ENCODE measurements at regions of chr14 and their contacts with region 1.

Region 1: DNA sequence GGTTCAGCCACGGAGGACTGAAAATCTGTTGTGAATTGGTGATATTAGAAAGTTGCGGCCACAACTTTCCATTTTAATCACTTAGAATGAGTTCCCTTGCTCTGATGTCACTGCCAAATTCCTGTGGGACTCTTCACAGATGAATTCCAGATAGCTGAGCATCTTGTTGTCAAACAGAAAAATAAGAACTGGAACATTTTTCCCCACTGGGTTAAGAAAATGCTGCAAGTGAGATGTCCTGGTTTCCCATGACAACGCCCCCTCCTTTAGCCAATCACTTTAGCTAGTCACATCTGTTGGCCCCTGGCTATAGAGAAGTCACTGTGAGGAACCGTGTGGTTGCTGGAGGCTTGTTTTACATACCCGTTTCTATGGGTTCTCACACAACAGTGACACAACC is 135.9 kb downstream of the KTN1 start:
- DNase-seq: no peak
- H3K4me3 ChIP-seq: no peak overlapping the region
- H3K27ac ChIP-seq: peak overlapping the region in 2 of 4 donors; percentile 50 to 59
- H3K4me1 ChIP-seq: no peaks in the 10 kb centered on the region
- H3K27me3 ChIP-seq: no peaks in the 10 kb centered on the region
- CTCF ChIP-seq: no peak
- POLR2A ChIP-seq: no peak

Region 2: GRCh38 chr14:56339855-56340701 is 624.2 kb after region 1 on chr14:
- intact Hi-C with region 1: loop called (anchors 10 kb)
- DNase-seq: no peak
- H3K4me3 ChIP-seq: no peak overlapping the region
- H3K27ac ChIP-seq: peak overlapping the region in 2 of 4 donors; percentile 24 to 54
- H3K4me1 ChIP-seq: peaks cover 9 to 38% (median 17%) of the 10 kb centered on the region in 3 donors
- H3K27me3 ChIP-seq: no peaks in the 10 kb centered on the region
- CTCF ChIP-seq: peak; percentile 67 to 84 (median 76)
- POLR2A ChIP-seq: no peak

Measured in esophagus squamous epithelium (tissue), 5 donors.